PC-9 (cell line): ENCODE measurements at regions of chr11 and their contacts with region 1.

Region 1: DNA sequence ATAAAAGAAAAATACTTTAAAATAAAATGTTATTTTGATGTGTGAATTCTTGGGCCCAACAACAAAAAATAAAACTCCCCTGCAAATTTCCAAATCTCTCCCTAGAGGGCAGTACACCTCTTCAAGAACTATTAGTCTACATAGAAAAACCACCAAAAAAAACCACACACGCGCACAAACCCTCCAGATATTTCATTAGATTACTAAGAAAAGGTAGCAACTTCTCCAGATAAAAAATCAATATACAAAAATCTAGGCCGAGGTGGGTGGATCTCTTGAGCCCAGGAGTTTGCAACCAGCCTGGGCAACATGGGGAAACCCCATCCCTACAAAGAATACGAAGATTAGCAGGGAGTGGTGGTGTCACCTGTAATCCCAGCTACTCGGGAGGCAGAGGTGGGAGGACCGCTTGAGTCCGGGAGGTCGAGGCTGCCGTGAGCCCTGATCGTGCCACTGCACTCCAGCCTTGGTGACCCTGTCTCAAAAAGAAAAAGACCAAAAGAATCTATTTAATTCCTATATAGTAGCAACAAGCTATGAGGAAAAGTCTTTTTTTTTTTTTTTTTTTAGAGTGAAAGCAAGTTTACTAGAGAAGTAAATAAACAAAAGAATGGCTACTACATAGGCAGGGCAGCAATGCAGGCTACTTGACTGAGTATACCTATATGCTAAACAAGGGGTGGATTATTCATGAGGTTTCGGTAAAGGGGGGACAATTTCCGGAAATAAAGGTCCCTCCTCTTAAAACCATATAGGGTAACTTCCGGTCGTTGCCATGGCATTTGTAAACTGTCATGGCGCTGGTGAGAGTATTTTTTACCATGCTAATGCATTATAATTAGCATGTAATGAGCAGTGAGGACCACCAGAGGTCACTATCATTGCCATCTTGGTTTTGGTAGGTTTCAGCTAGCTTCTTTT is 13.1 kb downstream of the B3GNT6 start:
- DNase-seq: peak; percentile 81 to 94
- H3K4me3 ChIP-seq: peak overlapping the region; percentile 68
- H3K27ac ChIP-seq: peak overlapping the region; percentile 35; the same call in 1 of the 2 replicates
- H3K4me1 ChIP-seq: peaks cover 10% of the 10 kb centered on the region
- H3K27me3 ChIP-seq: no peaks in the 10 kb centered on the region
- CTCF ChIP-seq: peak; percentile 87

Region 2: DNA sequence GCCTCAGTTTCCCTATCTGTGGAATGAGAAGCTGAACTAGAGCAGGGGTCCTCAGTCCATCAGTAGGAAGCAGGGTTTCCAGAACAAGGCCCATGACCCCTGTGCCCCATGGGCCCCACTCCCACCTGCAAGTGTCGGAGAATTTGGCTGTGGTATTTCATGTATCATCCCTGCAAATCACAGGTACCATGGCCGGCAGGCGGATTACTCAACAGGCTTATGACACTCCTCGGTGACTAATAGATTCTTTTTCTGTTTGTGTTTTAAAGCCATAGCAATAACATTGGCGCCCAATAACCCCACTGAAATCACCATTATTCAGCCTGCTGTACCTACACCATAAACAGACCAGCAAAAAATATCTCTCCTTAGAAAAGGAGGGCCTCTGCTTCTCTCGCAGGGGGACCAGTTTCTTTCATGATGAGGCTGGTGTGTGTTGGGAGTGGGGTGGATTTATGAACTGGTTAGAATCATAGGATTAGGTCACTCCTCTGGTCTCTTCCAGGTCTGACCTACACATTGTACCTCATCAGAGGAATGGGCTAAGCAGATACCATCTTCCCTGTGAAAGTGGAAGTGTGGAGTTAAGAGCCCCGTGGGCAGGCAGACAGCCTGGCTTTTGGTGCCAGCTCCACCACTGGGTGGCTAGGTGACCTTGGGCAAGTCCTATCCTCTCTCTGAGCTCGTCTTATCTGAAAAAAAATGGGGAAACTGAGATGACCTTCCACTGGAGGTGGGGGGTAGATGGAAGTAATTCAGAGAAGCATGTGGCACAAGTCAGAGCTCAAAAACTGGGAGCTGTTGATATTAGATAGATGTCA is 780.8 kb before region 1 on chr11:
- CTCF ChIA-PET with region 1: interaction called, 11 read pairs
- POLR2A ChIA-PET with region 1: no interaction called
- intact Hi-C with region 1: no loop called
- DNase-seq: peak; percentile 75 to 91
- H3K4me3 ChIP-seq: no peak overlapping the region
- H3K27ac ChIP-seq: peak overlapping the region; percentile 54
- H3K4me1 ChIP-seq: peaks cover 19% of the 10 kb centered on the region
- H3K27me3 ChIP-seq: no peaks in the 10 kb centered on the region
- CTCF ChIP-seq: no peak

Region 3: GRCh38 chr11:76919887-76920746 is 127.2 kb before region 1 on chr11:
- CTCF ChIA-PET with region 1: interaction called, 11 read pairs
- POLR2A ChIA-PET with region 1: no interaction called
- intact Hi-C with region 1: loop called (anchors 1 kb)
- DNase-seq: peak; percentile 67 to 68
- H3K4me3 ChIP-seq: no peak overlapping the region
- H3K27ac ChIP-seq: no peak overlapping the region
- H3K4me1 ChIP-seq: peaks cover 12% of the 10 kb centered on the region
- H3K27me3 ChIP-seq: no peaks in the 10 kb centered on the region
- CTCF ChIP-seq: peak; percentile 96

Region 4: DNA sequence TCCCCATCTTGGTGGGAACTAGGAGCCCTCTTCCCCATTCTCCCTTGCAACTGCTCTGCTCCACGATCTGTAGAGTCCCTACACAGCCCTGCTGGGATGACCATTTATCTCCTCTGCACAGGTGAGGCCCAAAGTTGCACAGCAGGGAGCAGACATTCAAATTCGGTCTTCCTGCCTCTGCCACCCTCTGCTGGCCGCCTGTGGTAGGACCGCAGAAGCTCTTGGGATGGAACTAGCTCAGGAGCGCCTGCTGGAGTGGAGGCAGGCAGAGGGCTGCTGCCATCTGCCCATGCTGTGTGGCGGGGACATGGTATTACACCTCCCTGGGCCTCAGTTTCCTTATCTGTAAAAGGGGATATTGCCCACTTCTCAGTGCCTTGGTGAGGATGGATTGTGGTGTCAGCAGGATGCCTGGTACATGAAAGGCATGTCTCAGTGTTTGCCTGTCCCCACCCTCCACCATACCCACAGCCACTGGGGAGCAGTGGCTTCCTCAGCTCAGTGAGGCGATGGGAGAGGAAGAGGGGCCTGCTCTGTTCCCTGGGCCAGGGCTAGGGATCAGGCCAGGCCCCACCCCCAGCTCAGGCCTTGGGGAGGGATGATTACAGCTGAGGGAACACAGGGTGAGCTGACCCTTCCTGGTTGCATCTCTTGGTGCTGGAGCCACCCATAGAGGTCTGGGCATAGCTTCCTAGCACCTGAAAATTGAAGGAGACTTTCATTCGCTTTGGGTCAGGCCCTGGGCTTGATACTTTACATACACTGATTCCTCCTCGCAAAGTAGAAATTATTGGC is 44.1 kb after region 1 on chr11:
- CTCF ChIA-PET with region 1: interaction called, 133 read pairs
- POLR2A ChIA-PET with region 1: interaction called, 15 read pairs
- intact Hi-C with region 1: loop called (anchors 1 kb)
- DNase-seq: peak; percentile 64 to 86
- H3K4me3 ChIP-seq: no peak overlapping the region
- H3K27ac ChIP-seq: no peak overlapping the region
- H3K4me1 ChIP-seq: peaks cover 47% of the 10 kb centered on the region
- H3K27me3 ChIP-seq: no peaks in the 10 kb centered on the region
- CTCF ChIP-seq: peak; percentile 99

Region 5: DNA sequence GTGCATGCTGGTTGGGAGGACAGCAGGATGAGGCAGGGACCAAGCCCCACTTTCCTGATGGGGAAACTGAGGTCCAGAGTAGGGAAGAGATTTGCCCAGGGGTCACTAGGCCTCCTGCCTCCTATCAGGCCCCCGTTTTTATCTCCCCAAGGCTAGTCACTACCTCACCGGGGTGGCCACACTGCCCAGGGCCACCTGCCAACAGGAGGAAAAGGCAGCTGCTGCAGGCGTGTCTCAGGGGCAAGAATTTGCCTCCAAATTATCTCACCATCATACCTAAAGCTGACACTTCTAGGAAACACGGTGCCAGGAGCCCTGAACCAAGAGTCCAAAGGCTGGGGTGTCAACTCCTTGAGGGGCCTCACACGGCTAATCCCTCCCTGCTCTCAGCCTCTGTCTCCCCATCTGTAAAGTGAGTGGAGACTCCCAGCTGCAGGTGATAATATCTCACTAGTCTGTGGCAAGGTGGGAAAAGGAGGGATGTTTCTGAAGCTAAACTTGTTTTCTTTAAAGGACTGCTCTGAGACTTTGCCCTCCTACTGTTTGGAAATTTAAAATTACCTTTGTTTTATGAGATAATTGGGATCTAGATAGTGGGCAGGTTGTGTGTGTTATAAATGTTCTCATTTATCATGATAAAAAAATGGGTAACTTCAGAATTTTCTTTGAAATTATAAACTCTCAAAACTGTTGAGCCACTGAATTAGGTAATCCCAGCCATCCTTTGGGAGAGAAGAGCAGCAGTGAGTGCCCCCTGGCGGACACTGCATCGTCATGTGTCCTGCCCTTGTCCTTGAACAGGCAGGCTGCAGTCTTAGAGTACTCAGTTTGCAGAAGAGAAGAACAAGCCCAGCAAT is 140.7 kb after region 1 on chr11:
- CTCF ChIA-PET with region 1: interaction called, 13 read pairs
- POLR2A ChIA-PET with region 1: no interaction called
- intact Hi-C with region 1: loop called (anchors 1 kb)
- DNase-seq: peak; percentile 69 to 81
- H3K4me3 ChIP-seq: no peak overlapping the region
- H3K27ac ChIP-seq: no peak overlapping the region
- H3K4me1 ChIP-seq: peaks cover 8% of the 10 kb centered on the region
- H3K27me3 ChIP-seq: peaks cover 28% of the 10 kb centered on the region
- CTCF ChIP-seq: peak; percentile 99

Region 6: GRCh38 chr11:77547863-77548551 is 500.7 kb after region 1 on chr11:
- CTCF ChIA-PET with region 1: interaction called, 10 read pairs
- POLR2A ChIA-PET with region 1: interaction called, 10 read pairs
- intact Hi-C with region 1: loop called (anchors 5 kb)
- DNase-seq: peak; percentile 39 to 57
- H3K4me3 ChIP-seq: no peak overlapping the region
- H3K27ac ChIP-seq: no peak overlapping the region
- H3K4me1 ChIP-seq: no peaks in the 10 kb centered on the region
- H3K27me3 ChIP-seq: no peaks in the 10 kb centered on the region
- CTCF ChIP-seq: peak; percentile 90